HEK293 (cell line): ENCODE measurements at regions of chr4 and their contacts with region 1.

Region 1: DNA sequence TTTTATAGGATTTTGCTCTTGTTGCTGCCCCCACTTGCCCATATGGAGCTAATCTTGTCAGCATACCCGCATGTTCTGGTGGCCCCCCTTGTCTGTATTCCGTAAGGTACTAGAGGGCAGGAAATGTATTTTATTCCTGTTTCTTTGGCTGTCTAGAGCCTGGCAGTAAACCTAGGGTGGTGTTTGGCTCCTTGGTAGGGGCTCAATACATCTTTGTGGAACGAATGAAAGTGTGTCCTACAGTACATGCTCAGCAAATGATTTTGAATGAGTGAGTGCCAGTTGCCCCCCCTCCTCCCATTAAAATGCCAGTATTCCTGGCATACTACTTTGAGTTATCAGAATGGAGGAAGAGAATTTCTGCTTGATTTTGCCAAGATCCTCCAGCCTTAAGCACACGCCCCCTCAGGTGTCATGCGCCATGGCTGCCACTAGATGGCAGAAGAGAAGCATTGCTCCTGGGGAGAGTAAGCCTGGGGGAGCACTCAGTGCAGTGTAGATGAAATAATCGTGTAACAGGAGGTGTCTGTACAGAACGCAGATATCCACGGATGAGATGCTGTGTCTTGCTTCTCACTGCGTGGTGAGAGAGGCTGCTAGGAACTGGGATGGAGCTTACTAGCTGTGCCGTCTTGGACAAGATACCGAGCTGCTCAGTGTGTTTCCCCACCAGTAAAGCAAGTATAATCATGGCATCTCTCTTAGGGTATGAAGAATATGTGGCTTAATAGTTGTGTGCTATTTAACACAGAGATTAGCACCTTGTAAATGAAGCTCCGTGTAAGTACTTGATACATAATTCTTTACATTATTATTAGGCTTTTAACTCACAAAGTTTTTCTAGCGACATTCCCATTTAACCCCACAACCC is 17.2 kb upstream of the RNF212 start:
- H3K4me3 ChIP-seq: no peak overlapping the region
- H3K27ac ChIP-seq: no peak overlapping the region
- H3K4me1 ChIP-seq: no peaks in the 10 kb centered on the region
- CTCF ChIP-seq: peak; percentile 77

Region 2: GRCh38 chr4:479972-480371 is 650.6 kb before region 1 on chr4:
- CTCF ChIA-PET with region 1: no interaction called
- POLR2A ChIA-PET with region 1: no interaction called
- H3K4me3 ChIP-seq: no peak overlapping the region
- H3K27ac ChIP-seq: no peak overlapping the region
- H3K4me1 ChIP-seq: no peaks in the 10 kb centered on the region
- CTCF ChIP-seq: no peak

Region 3: GRCh38 chr4:997375-998071 is 133.0 kb before region 1 on chr4:
- CTCF ChIA-PET with region 1: no interaction called
- POLR2A ChIA-PET with region 1: no interaction called
- H3K4me3 ChIP-seq: no peak overlapping the region
- H3K27ac ChIP-seq: no peak overlapping the region
- H3K4me1 ChIP-seq: no peaks in the 10 kb centered on the region; the same call in 1 of the 2 replicates
- CTCF ChIP-seq: no peak

Region 4: DNA sequence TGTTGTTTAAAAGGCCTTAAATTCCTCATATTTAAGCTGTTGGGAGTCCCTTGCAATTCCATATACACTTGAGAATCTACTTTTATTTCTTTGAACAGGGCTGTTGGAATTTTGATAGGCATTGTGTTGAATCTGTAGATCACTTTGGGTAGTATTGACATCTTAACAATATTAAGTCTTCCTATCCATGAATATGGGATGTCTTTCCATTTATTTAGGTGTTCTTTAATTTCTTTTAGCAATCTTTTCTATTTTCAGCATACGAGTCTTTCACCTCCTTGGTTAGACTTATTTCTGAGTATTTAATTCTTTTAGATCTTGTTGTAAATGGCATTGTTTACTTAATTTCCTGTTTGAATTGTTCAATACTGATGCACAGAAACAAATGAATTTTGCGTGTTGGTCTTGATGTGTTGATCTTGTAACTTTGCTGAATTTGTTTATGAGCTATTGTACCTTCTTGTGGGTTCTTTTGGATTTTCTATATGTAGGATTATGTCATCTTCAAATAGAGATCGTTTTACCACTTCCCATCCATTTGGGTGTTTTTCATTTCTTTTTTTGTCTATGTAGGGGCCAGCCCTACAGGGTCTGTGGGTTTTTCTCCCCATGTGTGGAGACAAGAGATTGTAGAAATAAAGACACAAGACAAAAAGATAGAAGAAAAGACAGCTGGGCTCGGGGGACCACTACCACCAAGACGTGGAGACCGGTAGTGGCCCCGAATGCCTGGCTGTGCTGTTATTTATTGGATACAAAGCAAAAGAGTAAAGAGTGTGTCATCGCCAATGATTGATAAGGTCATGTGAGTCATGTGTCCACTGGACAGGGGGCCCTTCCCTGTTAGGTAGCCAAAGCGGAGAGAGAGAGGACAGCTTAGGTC is 136.6 kb after region 1 on chr4:
- CTCF ChIA-PET with region 1: interaction called, 23 read pairs
- POLR2A ChIA-PET with region 1: no interaction called
- H3K4me3 ChIP-seq: no peak overlapping the region
- H3K27ac ChIP-seq: no peak overlapping the region
- H3K4me1 ChIP-seq: no peaks in the 10 kb centered on the region
- CTCF ChIP-seq: no peak